ENCODE measurements at regions of chr20 and their contacts with region 1.

Region 1: GRCh38 chr20:10090588-10091166 is 55.9 kb downstream of the ANKEF1 start:
- DNase-seq: peak; percentile 28
- ATAC-seq: peak; percentile 55
- H3K4me3 Mint-ChIP-seq: no peak overlapping the region
- H3K27ac Mint-ChIP-seq: no peak overlapping the region
- H3K4me1 Mint-ChIP-seq: no peaks in the 10 kb centered on the region
- H3K27me3 Mint-ChIP-seq: no peaks in the 10 kb centered on the region

Region 2: DNA sequence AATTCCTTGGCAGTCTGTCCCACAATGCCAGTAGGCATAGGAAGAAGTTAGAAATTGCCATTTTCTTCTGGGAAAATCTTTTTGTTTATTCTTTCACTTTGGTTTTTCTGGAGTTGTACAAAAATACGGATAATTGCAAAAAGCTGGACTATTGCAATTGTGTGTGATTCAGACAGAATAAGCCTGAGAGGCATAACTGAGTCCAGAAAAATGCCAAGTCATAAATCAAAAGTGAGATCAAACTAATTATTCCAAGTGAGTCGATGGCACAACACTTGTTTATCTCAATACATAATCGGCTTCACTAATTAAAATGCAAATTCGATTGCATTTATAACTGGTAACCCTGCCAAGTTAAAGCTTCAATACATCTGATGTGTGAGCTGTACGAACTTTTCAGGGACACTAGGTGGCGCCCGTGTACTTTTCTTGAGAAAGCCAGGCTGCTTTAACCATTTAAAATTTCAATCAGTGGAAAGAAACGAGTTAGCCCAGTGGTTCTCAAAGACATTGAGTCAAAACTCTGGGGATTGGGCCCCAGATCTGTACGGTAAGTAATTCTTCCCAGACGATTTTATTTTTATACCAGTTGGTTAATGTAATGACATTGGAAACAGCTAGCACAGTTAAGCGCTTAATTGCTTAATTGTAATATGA is 473.7 kb before region 1 on chr20:
- CTCF ChIA-PET with region 1: interaction called, 13 read pairs
- POLR2A ChIA-PET with region 1: no interaction called
- DNase-seq: peak; percentile 63
- ATAC-seq: no peak
- H3K4me3 Mint-ChIP-seq: no peak overlapping the region
- H3K27ac Mint-ChIP-seq: no peak overlapping the region
- H3K4me1 Mint-ChIP-seq: no peaks in the 10 kb centered on the region
- H3K27me3 Mint-ChIP-seq: no peaks in the 10 kb centered on the region

Region 3: GRCh38 chr20:9978397-9979004 is 112.2 kb before region 1 on chr20:
- CTCF ChIA-PET with region 1: interaction called, 45 read pairs
- POLR2A ChIA-PET with region 1: no interaction called
- DNase-seq: peak; percentile 53
- ATAC-seq: peak; percentile 81
- H3K4me3 Mint-ChIP-seq: no peak overlapping the region
- H3K27ac Mint-ChIP-seq: no peak overlapping the region
- H3K4me1 Mint-ChIP-seq: peaks cover 2% of the 10 kb centered on the region
- H3K27me3 Mint-ChIP-seq: peaks cover 11% of the 10 kb centered on the region

Region 4: DNA sequence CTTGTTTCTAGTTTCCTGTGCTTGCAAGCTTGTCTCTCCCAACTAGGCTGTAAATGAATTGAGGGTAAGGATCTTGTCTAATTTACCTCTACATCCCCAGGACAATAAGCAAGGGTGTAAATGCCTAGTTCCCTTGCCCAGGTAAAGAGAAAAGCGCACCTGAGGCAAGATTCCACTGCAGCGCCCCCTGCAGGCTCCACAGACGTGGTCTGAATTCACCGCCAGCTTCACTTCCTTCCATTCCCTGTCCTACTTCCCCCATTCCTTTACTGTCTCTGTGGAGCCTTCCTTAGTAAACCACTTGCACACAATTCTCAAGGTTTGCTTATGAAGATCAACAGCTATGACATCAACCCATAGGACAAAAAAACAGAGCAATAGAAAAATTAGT is 13.6 kb before region 1 on chr20:
- CTCF ChIA-PET with region 1: interaction called, 11 read pairs
- POLR2A ChIA-PET with region 1: no interaction called
- DNase-seq: no peak
- ATAC-seq: no peak
- H3K4me3 Mint-ChIP-seq: no peak overlapping the region
- H3K27ac Mint-ChIP-seq: no peak overlapping the region
- H3K4me1 Mint-ChIP-seq: no peaks in the 10 kb centered on the region
- H3K27me3 Mint-ChIP-seq: peaks cover 11% of the 10 kb centered on the region

Region 5: GRCh38 chr20:10105046-10105445 is 14.4 kb after region 1 on chr20:
- CTCF ChIA-PET with region 1: interaction called, 10 read pairs
- POLR2A ChIA-PET with region 1: no interaction called
- DNase-seq: no peak
- ATAC-seq: no peak
- H3K4me3 Mint-ChIP-seq: no peak overlapping the region
- H3K27ac Mint-ChIP-seq: no peak overlapping the region
- H3K4me1 Mint-ChIP-seq: no peaks in the 10 kb centered on the region
- H3K27me3 Mint-ChIP-seq: no peaks in the 10 kb centered on the region

Measured in activated CD8-positive, alpha-beta T cell treated with anti-CD3 and anti-CD28 coated beads, Interleukin-2, amount 10 ng/mL, durations not matched to agents 7 days and 5 days (primary cell).